ENCODE measurements at regions of chr3 and their contacts with region 1.

Region 1: DNA sequence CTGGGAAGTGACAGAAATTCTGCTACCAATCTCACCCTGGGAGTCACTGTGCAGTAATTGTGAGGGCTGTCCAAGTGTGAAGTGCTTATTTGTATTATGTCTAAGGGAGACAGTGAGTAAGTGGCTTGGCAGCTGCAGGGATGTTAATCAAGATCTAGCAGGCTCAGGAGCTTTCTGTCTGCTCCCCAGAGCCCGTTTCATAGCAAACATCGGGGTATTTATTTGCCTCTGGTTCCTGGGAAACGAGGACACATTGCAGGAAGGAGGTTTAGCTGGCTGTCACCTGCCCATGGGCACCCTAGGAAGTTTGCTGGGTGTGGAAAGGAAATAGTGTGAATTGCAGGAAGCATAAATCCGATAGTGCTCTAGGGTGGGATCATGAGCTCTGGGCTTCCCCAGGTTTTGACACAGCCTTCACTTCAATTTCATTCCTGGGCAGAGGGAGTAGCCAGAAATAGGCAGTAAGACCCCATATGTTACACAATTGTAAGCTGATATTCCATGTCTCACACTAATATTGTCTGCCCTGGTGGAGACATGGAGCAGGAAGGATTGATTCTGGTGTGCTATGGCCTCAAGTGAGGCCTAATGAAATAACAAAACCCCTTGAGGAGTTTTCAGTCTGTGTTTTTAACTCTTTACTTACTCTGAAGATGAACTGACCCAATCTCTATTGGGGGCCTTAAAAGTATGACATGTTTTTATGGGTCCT is 74.1 kb upstream of the MITF start:
- DNase-seq: no peak
- ATAC-seq: peak; percentile 81
- H3K4me3 ChIP-seq: no peak overlapping the region
- H3K27ac ChIP-seq: no peak overlapping the region
- H3K4me1 ChIP-seq: peaks cover 16% of the 10 kb centered on the region
- H3K27me3 ChIP-seq: no peaks in the 10 kb centered on the region
- CTCF ChIP-seq: no peak

Region 2: GRCh38 chr3:69174871-69175737 is 490.1 kb before region 1 on chr3:
- intact Hi-C with region 1: loop called (anchors 5 kb)
- DNase-seq: no peak
- ATAC-seq: no peak
- H3K4me3 ChIP-seq: no peak overlapping the region
- H3K27ac ChIP-seq: no peak overlapping the region
- H3K4me1 ChIP-seq: peaks cover 30% of the 10 kb centered on the region
- H3K27me3 ChIP-seq: no peaks in the 10 kb centered on the region
- CTCF ChIP-seq: no peak